ENCODE measurements at regions of chr19 and their contacts with region 1.

Region 1: DNA sequence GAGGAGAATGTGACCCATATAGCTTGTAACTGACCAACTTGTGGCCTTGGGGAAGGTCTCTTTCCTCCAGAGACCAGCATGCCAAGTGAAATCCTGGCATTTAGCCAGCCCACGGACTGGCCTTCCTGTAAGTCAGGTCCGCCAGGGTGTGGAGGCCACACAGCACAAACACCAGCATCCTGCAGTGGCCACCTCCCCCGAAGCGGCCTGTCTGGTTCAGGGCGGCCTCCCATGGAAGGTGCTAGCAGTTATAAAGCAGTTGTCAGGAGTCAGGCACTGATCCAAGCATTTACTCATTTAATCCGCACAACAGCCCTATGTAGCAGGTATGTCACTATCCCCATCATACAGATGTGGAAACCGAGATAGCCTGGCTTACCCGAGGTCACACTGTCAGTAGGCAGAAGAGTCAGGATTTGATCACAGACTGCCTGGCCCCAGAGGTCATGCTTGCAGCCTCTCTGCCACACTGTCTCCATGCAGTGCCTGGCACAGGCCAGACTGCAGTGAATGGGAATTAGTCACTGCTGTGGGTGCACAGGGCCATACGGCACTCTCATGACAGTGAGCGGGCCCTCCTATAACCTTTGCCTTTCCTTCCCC is 36.7 kb downstream of the CAPN12 start:
- DNase-seq: peak; percentile 91
- H3K4me3 ChIP-seq: no peak overlapping the region
- H3K27ac ChIP-seq: peak overlapping the region; percentile 47
- H3K4me1 ChIP-seq: peaks cover 30% of the 10 kb centered on the region
- H3K27me3 ChIP-seq: no peaks in the 10 kb centered on the region
- CTCF ChIP-seq: no peak
- POLR2A ChIP-seq: peak; percentile 70

Region 2: DNA sequence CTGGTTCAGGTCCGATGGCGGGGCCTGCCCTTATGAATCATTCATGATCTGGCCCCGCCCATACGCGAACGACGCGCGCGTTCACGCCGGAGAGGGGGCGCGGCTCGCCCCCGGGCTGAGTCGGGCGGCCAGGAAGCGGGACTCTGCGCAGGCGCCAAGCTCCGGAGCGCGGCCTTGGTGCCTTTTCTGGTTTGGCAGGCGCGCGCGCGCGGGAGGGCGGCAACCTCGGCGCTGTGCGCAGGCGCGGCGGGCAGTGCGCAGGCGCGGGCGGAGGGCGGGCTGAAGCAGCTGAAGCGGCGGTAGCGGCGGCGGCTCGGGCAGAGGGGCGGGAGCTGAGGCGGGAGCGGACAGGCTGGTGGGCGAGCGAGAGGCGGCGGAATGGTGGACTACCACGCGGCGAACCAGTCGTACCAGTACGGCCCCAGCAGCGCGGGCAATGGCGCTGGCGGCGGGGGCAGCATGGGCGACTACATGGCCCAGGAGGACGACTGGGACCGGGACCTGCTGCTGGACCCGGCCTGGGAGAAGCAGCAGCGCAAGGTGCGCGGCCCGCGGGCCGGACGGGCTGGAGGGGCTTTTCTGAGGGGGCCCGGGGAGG is 60.1 kb before region 1 on chr19 and contains the start of gene ACTN4:
- CTCF ChIA-PET with region 1: interaction called, 5 read pairs
- POLR2A ChIA-PET with region 1: interaction called, 10 read pairs
- dilution Hi-C with region 1: no loop called
- intact Hi-C with region 1: loop called (anchors 1 kb)
- DNase-seq: peak; percentile 98
- H3K4me3 ChIP-seq: peak within 1 kb of the TSS; percentile 96 to 99 (median 98)
- H3K27ac ChIP-seq: peak within 1 kb of the TSS; percentile 70
- H3K4me1 ChIP-seq: peaks cover 28% of the 10 kb centered on the region
- H3K27me3 ChIP-seq: no peaks in the 10 kb centered on the region
- CTCF ChIP-seq: no peak
- POLR2A ChIP-seq: peak; percentile 97
- total RNA-seq, gene ACTN4: 693 and 748 TPM in 2 replicates

Region 3: DNA sequence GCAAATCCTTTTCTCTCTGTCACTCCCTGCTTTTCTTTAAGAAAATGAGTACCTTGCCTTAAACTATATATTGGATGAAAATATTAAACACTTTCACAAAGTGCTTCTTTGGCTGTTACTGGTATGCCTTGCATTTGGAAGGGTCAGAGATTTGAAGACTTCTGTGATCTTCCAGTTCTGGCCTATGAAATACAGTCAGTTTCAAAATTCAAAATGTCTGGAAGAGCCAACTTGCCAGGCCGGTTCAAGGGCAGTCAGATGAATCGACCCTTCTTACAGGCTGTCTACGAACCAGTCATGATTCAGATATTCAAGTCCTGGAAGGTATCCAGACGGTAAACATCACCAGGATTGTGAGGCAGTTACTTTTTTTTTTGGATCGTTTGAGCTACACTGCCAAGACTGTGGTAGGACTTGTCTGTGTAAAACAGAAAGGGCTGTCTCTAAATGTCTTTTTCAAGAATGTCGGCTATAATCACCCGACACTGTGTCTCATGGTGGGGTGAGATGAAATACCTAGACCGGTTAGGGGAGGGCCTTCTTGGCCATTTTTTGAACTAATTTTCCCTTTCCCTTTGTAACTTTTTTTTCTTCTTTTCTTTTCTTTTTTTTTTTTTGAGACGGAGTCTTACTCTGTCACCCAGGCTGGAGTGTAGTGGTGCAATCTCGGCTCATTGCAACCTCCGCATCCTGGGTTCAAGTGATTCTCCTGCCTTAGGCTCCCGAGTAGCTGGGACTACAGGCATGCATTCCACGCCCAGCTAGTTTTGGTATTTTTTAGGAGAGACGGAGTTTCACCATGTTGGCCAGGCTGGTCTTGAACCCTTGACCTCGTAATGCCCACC is 48.9 kb before region 1 on chr19:
- CTCF ChIA-PET with region 1: interaction called, 4 read pairs
- POLR2A ChIA-PET with region 1: interaction called, 3 read pairs
- dilution Hi-C with region 1: no loop called
- intact Hi-C with region 1: loop called (anchors 2 kb)
- DNase-seq: peak; percentile 98
- H3K4me3 ChIP-seq: no peak overlapping the region
- H3K27ac ChIP-seq: peak overlapping the region; percentile 87
- H3K4me1 ChIP-seq: peaks cover 66% of the 10 kb centered on the region
- H3K27me3 ChIP-seq: no peaks in the 10 kb centered on the region
- CTCF ChIP-seq: no peak
- POLR2A ChIP-seq: no peak

Region 4: DNA sequence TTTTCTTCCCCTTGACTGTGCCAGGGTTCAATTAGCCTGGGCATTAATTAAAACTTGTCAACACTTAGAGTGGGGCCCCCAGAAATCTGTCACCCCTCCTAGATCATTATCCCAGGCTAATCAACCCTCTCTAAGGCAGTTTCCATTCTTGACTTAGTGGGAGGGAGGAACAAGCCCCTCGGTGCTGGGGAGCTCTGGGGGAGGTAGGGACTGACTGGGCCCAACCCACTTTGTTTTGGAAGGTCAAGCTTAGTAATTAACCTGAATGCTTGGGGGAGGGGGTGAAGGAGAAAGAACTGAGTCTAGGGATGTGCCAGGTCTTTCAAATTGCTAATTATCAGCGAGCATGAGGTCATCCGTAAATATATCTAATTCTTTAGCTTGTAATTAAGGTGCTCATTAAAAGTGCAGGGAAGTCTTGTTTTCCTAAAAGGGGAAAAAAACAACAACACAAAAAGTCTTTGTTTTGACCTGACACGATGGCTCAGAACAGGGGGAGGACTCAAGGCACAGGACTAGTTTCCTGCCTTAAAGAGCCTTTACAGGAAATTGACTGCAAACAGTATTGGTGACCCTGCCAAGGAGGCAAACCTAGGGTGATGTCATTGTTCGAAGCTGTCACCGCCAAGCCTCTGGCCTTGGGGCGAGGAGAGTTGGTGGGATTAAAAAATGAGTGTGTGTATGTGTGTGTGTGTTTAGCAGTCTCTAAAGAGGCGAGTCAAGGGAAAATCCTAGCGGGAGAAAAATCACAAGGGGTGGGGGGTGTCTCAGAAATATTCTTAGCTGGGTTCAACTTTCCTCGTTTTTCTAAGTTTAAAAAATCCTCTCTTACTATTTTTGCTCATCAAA is 40.7 kb before region 1 on chr19:
- CTCF ChIA-PET with region 1: interaction called, 4 read pairs
- POLR2A ChIA-PET with region 1: no interaction called
- dilution Hi-C with region 1: no loop called
- intact Hi-C with region 1: loop called (anchors 1 kb)
- DNase-seq: peak; percentile 90
- H3K4me3 ChIP-seq: peak overlapping the region in 1 of 3 experiments; percentile 5
- H3K27ac ChIP-seq: peak overlapping the region; percentile 95
- H3K4me1 ChIP-seq: peaks cover 82% of the 10 kb centered on the region
- H3K27me3 ChIP-seq: no peaks in the 10 kb centered on the region
- CTCF ChIP-seq: no peak
- POLR2A ChIP-seq: peak; percentile 12

Region 5: GRCh38 chr19:38683393-38684080 is 24.1 kb before region 1 on chr19:
- CTCF ChIA-PET with region 1: interaction called, 6 read pairs
- POLR2A ChIA-PET with region 1: no interaction called
- dilution Hi-C with region 1: no loop called
- intact Hi-C with region 1: loop called (anchors 1 kb)
- DNase-seq: peak; percentile 89
- H3K4me3 ChIP-seq: no peak overlapping the region
- H3K27ac ChIP-seq: peak overlapping the region; percentile 90
- H3K4me1 ChIP-seq: peaks cover 66% of the 10 kb centered on the region
- H3K27me3 ChIP-seq: no peaks in the 10 kb centered on the region
- CTCF ChIP-seq: no peak
- POLR2A ChIP-seq: no peak